ENCODE measurements at regions of chr5 and their contacts with region 1.

Region 1: DNA sequence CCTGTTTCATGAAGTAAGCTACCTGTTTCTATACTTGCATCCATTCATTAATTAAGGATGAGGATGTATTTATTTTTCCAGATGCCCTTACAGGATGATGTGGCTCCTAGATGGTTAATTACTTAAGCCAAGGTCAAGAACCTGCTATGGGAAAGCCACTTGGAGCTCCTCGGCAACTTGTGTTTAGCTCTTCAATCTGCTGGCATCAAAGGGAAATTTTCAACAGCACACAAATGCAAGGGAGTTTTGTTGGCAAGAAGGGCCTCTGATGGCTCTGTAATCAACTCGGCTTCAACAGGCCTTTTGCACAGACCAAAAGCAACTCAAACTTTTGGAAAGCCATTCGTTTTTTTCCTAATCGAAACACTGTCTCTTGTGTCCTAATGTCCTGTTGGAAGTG is 125.3 kb downstream of the EFNA5 start:
- DNase-seq: no peak
- H3K4me3 ChIP-seq: no peak overlapping the region
- H3K27ac ChIP-seq: no peak overlapping the region
- H3K4me1 ChIP-seq: peaks cover 53% of the 10 kb centered on the region
- CTCF ChIP-seq: no peak

Region 2: GRCh38 chr5:107532169-107532878 is 13.2 kb before region 1 on chr5:
- CTCF ChIA-PET with region 1: interaction called, 8 read pairs
- POLR2A ChIA-PET with region 1: interaction called, 19 read pairs
- intact Hi-C with region 1: no loop called
- DNase-seq: no peak
- H3K4me3 ChIP-seq: no peak overlapping the region
- H3K27ac ChIP-seq: no peak overlapping the region
- H3K4me1 ChIP-seq: no peaks in the 10 kb centered on the region
- CTCF ChIP-seq: no peak

Region 3: GRCh38 chr5:108079753-108080152 is 534.3 kb after region 1 on chr5:
- CTCF ChIA-PET with region 1: no interaction called
- POLR2A ChIA-PET with region 1: no interaction called
- intact Hi-C with region 1: no loop called
- DNase-seq: no peak
- H3K4me3 ChIP-seq: no peak overlapping the region
- H3K27ac ChIP-seq: no peak overlapping the region
- H3K4me1 ChIP-seq: no peaks in the 10 kb centered on the region
- CTCF ChIP-seq: no peak

Measured in OCI-LY7 (cell line).